Spleen (tissue), 13 donors: ENCODE measurements at regions of chr15 and their contacts with region 1.

Region 1: DNA sequence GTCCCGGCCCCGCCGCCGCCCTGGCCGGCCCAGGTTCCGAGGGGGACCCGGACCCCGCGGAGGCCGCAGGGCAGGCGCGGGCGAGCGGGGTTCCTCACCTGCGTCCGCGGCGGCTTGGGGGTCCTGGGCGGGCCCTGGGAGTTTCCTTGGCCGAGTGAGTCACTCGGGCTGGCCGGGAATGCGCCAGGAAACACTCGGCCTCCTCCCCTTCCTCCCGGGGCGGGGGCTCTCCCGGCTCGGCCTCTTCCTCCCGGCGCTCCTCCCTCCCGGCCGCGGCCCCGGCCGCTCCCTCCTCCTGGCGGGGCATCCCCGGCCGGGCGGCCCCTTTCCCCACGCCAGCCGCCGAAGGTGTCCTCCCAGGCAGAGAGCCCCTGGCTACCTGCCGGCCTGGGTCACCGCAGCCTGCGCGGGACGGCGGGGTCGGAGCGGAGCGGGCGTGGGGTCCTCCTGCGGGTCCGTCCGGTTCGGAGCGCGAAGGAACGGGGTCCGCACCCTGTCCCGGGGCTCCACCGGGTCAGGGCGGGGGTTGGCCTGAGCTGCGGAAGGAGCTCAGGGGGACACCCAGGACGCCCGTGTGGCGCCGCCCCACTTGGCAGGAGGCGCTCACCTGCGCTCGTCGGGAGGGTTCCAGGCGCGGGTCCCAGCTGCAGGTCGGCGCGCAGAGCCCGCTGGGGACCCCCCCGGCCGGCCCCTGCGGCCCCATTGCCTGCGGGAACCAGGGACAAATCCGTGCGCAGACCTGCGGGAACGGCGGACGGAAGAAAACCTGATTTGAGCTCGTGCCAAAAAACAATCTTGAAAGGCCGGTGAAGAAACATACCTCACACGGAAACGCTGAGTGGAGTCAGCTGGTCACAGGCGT is at the start of gene CYFIP1:
- DNase-seq: peak; percentile 88
- H3K4me3 ChIP-seq: peak within 1 kb of the TSS; percentile 58 to 96 (median 80)
- H3K27ac ChIP-seq: peak within 1 kb of the TSS; percentile 17 to 87 (median 82)
- H3K4me1 ChIP-seq: peaks cover 5 to 37% (median 21%) of the 10 kb centered on the region in 6 donors
- H3K27me3 ChIP-seq: peaks cover 0 to 31% (median 20%) of the 10 kb centered on the region in 7 donors
- CTCF ChIP-seq: no peak
- POLR2A ChIP-seq: no peak
- total RNA-seq, gene CYFIP1: 75.2 to 139 (median 90.6) TPM

Region 2: GRCh38 chr15:23039151-23039916 is 58.9 kb after region 1 on chr15 and contains the start of gene TUBGCP5:
- intact Hi-C with region 1: loop called (anchors 10 kb)
- DNase-seq: peak; percentile 98
- H3K4me3 ChIP-seq: peak within 1 kb of the TSS; percentile 85 to 99 (median 96)
- H3K27ac ChIP-seq: peak within 1 kb of the TSS in 7 of 8 donors; percentile 45 to 87 (median 85)
- H3K4me1 ChIP-seq: peaks cover 0 to 38% (median 21%) of the 10 kb centered on the region in 6 donors
- H3K27me3 ChIP-seq: no peaks in the 10 kb centered on the region
- CTCF ChIP-seq: peak; percentile 51 to 88 (median 75)
- POLR2A ChIP-seq: peak in 1 of 3 donors; percentile 73
- total RNA-seq, gene TUBGCP5: 15.5 to 27.5 (median 19.5) TPM